ENCODE measurements at regions of chr7 and their contacts with region 1.

Region 1: DNA sequence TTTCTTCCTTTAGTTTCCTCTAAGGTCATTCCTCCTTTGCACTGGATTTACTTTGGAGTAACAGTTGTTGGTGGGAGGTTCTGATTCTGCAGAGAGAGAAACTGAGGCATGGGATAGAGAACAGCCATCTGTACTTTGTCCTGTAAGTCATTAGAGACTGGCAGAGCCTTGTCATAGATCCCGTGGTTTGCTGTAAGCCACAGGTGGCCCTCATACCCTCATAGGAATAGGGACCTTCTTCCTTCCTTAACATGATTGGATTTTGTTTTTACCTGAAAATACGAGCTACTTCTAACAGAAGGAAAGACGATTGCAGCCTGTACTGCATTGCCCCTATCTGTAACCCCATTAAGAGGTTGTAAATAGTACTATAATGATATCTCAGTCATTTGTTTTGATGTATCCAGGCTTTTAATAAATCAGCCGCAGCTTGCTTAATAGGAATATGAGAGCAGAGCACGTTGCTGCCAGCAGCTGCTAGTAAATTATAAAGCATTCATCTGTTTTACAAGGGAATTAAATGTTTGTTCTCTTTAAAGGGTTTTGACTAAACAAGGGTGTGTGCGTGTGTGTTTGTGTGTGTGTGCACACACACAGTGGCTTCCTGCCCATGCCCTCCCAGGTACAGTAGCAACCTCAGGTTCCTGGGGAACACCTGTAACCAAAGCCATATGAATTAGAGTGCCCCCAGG is 249.8 kb downstream of the AUTS2 start:
- DNase-seq: no peak
- H3K4me3 ChIP-seq: no peak overlapping the region
- H3K27ac ChIP-seq: peak overlapping the region in 3 of 4 donors; percentile 19 to 44 (median 24)
- H3K4me1 ChIP-seq: peaks cover 0 to 21% (median 18%) of the 10 kb centered on the region in 4 donors
- H3K27me3 ChIP-seq: no peaks in the 10 kb centered on the region
- CTCF ChIP-seq: no peak
- EP300 ChIP-seq: peak in 1 of 4 donors; percentile 19
- POLR2A ChIP-seq: no peak

Region 2: DNA sequence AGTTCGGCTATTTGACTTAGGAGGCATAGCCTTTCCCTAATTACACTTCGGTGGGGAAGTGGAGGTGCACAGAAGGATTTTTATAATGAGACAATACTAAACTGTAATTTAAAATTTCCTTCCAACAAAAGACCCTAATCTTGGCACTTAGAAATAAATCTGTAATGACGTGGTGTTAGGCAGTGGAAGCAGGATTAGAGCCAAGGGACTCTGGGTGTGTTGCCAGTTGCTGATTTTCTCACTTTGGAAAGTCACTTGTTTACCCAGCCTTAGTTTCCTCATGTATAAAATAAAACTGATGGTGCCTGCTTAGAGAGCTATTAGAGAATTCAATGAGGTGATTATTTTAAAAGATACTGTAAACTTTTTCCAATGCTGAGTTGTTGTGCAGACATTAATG is 37.4 kb after region 1 on chr7:
- intact Hi-C with region 1: loop called (anchors 2 kb)
- DNase-seq: no peak
- H3K4me3 ChIP-seq: no peak overlapping the region
- H3K27ac ChIP-seq: no peak overlapping the region
- H3K4me1 ChIP-seq: peaks cover 0 to 36% (median 13%) of the 10 kb centered on the region in 4 donors
- H3K27me3 ChIP-seq: no peaks in the 10 kb centered on the region
- CTCF ChIP-seq: no peak
- EP300 ChIP-seq: no peak
- POLR2A ChIP-seq: no peak

Measured in sigmoid colon (tissue), 7 donors.